GM12878 (cell line): ENCODE measurements at regions of chr9 and their contacts with region 1.

Region 1: GRCh38 chr9:6673326-6674025 is 27.9 kb upstream of the GLDC start:
- DNase-seq: no peak
- ATAC-seq: peak; percentile 77
- H3K4me3 ChIP-seq: no peak overlapping the region
- H3K27ac ChIP-seq: no peak overlapping the region
- H3K4me1 ChIP-seq: peaks cover 9% of the 10 kb centered on the region
- H3K27me3 ChIP-seq: no peaks in the 10 kb centered on the region
- CTCF ChIP-seq: no peak
- EP300 ChIP-seq: peak; percentile 66 to 77; a peak in 2 of 4 replicates
- POLR2A ChIP-seq: no peak
- RAD21 ChIP-seq: no peak

Region 2: GRCh38 chr9:6645355-6646292 is 27.9 kb before region 1 on chr9 and contains the start of gene GLDC:
- CTCF ChIA-PET with region 1: interaction called, 16 read pairs
- POLR2A ChIA-PET with region 1: interaction called, 8 read pairs
- RAD21 ChIA-PET with region 1: interaction called, 7 read pairs
- SMC1A ChIA-PET with region 1: interaction called, 15 read pairs
- in situ Hi-C with region 1: no loop called
- intact Hi-C with region 1: no loop called
- DNase-seq: no peak
- ATAC-seq: peak; percentile 91
- H3K4me3 ChIP-seq: peak within 1 kb of the TSS; percentile 94
- H3K27ac ChIP-seq: peak within 1 kb of the TSS; percentile 75
- H3K4me1 ChIP-seq: no peaks in the 10 kb centered on the region; the same call in 1 of the 2 replicates
- H3K27me3 ChIP-seq: no peaks in the 10 kb centered on the region
- CTCF ChIP-seq: no peak
- EP300 ChIP-seq: no peak
- POLR2A ChIP-seq: peak; percentile 80
- RAD21 ChIP-seq: no peak
- polyA plus RNA-seq, gene GLDC: 88.2 to 112 TPM

Region 3: DNA sequence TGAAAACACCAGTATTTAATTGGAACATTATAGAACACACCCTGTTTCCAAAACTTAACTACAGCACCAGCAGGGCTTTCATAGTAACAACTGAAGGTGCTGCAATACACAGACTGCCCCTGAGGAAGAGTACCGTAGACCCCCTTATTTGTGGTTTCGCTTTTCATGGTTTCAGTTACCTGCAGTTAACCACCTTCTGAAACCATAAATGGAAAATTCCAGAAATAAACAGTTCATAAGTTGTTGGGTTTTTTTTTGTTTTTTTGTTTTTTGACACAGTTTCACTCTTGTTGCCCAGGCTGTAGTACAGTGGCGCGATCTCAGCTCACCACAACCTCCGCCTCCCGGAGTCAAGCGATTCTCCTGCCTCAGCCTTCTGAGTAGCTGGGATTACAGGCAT is 18.4 kb before region 1 on chr9:
- CTCF ChIA-PET with region 1: interaction called, 9 read pairs
- POLR2A ChIA-PET with region 1: interaction called, 11 read pairs
- RAD21 ChIA-PET with region 1: interaction called, 6 read pairs
- SMC1A ChIA-PET with region 1: interaction called, 17 read pairs
- in situ Hi-C with region 1: no loop called
- intact Hi-C with region 1: no loop called
- DNase-seq: peak; percentile 84
- ATAC-seq: peak; percentile 91
- H3K4me3 ChIP-seq: peak overlapping the region; percentile 21; the same call in 1 of the 2 replicates
- H3K27ac ChIP-seq: peak overlapping the region; percentile 49
- H3K4me1 ChIP-seq: peaks cover 29% of the 10 kb centered on the region
- H3K27me3 ChIP-seq: no peaks in the 10 kb centered on the region
- CTCF ChIP-seq: no peak
- EP300 ChIP-seq: peak; percentile 68 to 77; a peak in 3 of 4 replicates
- POLR2A ChIP-seq: no peak
- RAD21 ChIP-seq: 0 out of 2 replicates have a peak, but pooled peaks have one; percentile 8

Region 4: DNA sequence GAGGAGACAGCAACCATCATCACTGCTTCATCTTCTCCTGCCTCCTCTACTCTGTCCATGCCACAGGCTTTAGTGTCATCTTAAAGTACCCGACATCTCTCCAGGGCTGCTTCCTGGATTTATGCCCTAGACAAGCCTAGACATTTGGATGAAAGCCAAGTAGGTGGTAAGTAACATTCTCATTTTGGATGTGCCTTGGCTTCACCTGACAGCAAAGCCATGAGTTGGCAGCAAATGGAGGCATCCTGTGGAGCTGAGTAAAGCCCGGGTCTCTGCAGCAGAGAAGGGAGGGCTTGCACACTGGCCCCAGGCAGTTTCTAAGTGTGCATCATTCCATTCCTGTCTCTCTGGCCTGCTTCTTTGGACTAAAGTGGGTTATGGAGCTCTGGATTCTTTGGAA is 827.0 kb after region 1 on chr9:
- CTCF ChIA-PET with region 1: no interaction called
- POLR2A ChIA-PET with region 1: no interaction called
- RAD21 ChIA-PET with region 1: no interaction called
- SMC1A ChIA-PET with region 1: no interaction called
- in situ Hi-C with region 1: no loop called
- intact Hi-C with region 1: no loop called
- DNase-seq: no peak
- ATAC-seq: no peak
- H3K4me3 ChIP-seq: no peak overlapping the region
- H3K27ac ChIP-seq: no peak overlapping the region
- H3K4me1 ChIP-seq: no peaks in the 10 kb centered on the region
- H3K27me3 ChIP-seq: no peaks in the 10 kb centered on the region
- CTCF ChIP-seq: no peak
- EP300 ChIP-seq: no peak
- POLR2A ChIP-seq: no peak
- RAD21 ChIP-seq: no peak